PC-9 (cell line): ENCODE measurements at regions of chr22 and their contacts with region 1.

Region 1: DNA sequence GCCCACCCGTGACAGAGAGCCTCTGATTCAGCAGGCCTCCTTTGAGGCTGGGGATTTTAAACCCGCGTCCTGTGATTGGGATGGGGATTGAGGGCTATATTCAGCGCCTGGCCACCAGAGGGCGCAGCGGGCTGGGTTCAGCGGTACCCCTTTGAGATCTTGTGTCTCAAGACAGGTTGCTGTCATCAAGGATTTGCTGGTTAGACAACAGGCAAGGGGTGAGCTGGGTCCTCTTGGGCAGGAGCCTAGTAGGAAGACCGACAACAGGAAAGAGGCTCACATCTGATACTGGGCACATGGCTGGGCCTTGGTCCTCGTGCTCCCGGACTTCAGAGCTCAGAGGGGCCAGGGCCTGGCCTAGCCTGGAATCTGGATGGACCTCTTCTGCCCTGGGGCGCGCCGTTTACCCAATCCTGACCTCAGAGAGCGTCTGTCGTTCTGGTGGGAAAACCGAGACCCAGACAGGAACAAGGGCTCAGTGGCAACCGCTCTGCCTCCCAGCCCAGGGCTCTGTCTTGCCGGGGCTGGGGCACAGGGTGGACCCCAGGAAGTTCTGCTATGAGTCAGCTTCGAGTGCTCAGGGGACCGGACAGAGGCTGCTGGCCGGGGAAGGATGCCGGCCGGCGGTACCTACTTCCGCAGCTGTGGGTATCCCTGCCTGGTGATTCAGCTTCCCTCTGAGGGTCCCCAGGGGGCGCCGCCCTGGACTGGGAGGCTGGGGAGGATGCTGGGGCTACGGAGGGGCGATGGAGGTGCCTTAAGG is 929 bp upstream of the SLC35E4 start:
- DNase-seq: peak; percentile 87 to 89
- H3K4me3 ChIP-seq: peak overlapping the region; percentile 74; the same call in 1 of the 2 replicates
- H3K27ac ChIP-seq: peak overlapping the region; percentile 50
- H3K4me1 ChIP-seq: peaks cover 25% of the 10 kb centered on the region
- H3K27me3 ChIP-seq: no peaks in the 10 kb centered on the region
- CTCF ChIP-seq: peak; percentile 99

Region 2: DNA sequence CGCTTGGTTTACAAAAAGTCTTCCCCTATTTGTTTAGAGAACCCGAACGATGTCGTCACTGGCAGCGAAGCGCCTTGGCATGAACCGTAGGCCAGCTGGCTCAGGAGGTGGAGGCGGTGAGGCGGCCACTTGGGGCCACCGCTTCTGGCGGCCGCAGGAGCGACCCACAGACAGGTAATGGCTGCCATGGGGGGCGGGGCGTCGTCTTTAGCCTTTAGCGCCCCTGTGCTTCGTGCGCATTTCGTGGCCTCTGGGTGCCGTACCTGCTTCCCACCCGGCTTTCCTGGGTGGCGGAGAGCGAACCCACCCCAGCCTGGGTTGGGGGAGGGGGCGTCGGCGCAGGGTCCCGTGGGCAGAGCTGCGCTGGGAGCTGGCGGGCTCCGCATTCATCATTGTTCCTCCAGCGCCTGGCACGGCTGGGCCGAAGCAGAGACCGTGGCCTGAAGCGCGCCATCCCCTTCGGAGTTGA is 59.6 kb after region 1 on chr22:
- CTCF ChIA-PET with region 1: interaction called, 4 read pairs
- POLR2A ChIA-PET with region 1: no interaction called
- intact Hi-C with region 1: loop called (anchors 1 kb)
- DNase-seq: peak; percentile 59 to 70
- H3K4me3 ChIP-seq: peak overlapping the region; percentile 64
- H3K27ac ChIP-seq: no peak overlapping the region
- H3K4me1 ChIP-seq: peaks cover 9% of the 10 kb centered on the region; the same call in 1 of the 2 replicates
- H3K27me3 ChIP-seq: no peaks in the 10 kb centered on the region
- CTCF ChIP-seq: no peak

Region 3: GRCh38 chr22:30754971-30755756 is 120.5 kb after region 1 on chr22:
- CTCF ChIA-PET with region 1: interaction called, 26 read pairs
- POLR2A ChIA-PET with region 1: interaction called, 6 read pairs
- intact Hi-C with region 1: loop called (anchors 1 kb)
- DNase-seq: peak; percentile 60 to 69
- H3K4me3 ChIP-seq: no peak overlapping the region
- H3K27ac ChIP-seq: no peak overlapping the region
- H3K4me1 ChIP-seq: no peaks in the 10 kb centered on the region
- H3K27me3 ChIP-seq: no peaks in the 10 kb centered on the region
- CTCF ChIP-seq: peak; percentile 87

Region 4: DNA sequence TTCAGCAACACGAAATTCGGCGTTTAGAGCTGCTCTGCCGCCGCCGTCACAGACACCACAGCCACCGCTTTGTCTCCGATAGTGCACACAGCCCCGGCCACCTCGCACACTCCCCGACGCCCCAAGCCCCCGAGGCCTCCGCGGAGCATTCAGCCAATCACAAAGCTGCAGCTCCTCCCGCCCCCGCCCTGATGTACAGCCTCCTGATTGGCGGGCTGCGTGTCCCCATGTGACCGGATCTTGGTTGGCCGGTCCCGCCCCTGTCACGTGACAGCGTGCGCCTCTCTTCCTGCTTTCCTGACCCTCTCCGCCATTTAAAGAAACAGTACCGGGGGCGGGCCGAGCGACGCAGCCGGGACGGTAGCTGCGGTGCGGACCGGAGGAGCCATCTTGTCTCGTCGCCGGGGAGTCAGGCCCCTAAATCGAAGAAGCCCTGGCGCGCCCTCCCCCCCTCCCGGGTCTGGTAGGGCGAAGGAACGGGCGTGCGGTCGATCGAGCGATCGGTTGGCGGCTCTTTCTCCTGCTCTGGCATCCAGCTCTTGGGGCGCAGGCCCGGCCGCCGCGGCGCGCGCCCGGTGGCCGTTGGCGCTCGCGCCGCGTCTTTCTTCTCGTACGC is 334.4 kb after region 1 on chr22 and contains the start of gene TUG1:
- CTCF ChIA-PET with region 1: interaction called, 18 read pairs
- POLR2A ChIA-PET with region 1: no interaction called
- intact Hi-C with region 1: no loop called
- DNase-seq: peak; percentile 95 to 97
- H3K4me3 ChIP-seq: peak within 1 kb of the TSS; percentile 89
- H3K27ac ChIP-seq: peak within 1 kb of the TSS; percentile 78
- H3K4me1 ChIP-seq: peaks cover 32% of the 10 kb centered on the region; the same call in 1 of the 2 replicates
- H3K27me3 ChIP-seq: no peaks in the 10 kb centered on the region
- CTCF ChIP-seq: no peak
- total RNA-seq, gene TUG1: 80.6 and 105 TPM in 2 replicates